Activated T-helper 2 cell treated with anti-CD3 and anti-CD28 coated beads, Interferon-gamma antibody, Interleukin-2, Interleukin-4, amounts not matched to agents 10 μg/mL and 5 μg/mL and 100 μg/mL, durations not matched to agents 14 hours and 24 hours and 36 hours (primary cell): ENCODE measurements at regions of chr17 and their contacts with region 1.

Region 1: DNA sequence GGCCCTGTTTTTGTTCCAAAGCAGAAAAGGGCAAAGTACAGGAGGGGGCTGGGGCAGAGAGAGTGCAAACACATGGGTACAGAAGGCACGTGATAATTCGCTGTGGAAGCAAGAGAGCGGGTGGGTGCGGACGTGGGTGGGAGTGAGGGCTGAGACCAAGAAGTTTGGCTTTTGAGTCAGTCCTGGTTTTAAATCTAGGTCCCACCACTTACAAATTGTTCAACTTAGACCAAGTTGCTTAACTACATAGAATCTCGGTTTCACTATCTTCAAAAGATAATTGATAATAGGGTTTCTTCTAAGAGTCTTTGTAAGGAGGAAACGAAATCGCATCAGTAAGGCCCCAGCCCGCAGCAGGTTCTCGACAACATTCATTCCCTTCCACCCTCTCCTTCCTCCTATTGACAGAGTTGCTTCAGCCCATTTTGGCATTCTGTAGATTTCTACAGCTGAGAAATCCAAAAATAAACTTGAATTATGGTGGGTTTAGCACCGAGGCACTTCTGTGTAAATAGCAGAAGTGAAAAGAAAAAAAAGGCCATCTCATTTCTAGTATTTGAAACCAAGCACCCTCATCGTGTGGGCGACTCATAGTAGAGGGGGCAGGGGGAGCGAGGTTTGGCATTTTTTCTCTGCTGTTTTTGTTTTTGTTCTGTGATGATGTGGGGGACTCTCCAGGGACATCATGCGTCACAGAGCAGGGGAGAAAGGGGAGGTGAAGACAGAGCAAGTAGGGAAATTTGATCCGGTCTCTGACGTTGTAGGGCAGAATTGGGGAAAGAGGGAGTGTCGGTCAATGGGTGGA is 33.6 kb upstream of the CCR7 start:
- DNase-seq: no peak
- H3K4me3 Mint-ChIP-seq: peak overlapping the region; percentile 54
- H3K27ac Mint-ChIP-seq: peak overlapping the region; percentile 89
- H3K4me1 Mint-ChIP-seq: peaks cover 83% of the 10 kb centered on the region
- H3K27me3 Mint-ChIP-seq: no peaks in the 10 kb centered on the region

Region 2: GRCh38 chr17:40526668-40527067 is 72.2 kb before region 1 on chr17:
- intact Hi-C with region 1: no loop called
- DNase-seq: no peak
- H3K4me3 Mint-ChIP-seq: no peak overlapping the region
- H3K27ac Mint-ChIP-seq: peak overlapping the region; percentile 16
- H3K4me1 Mint-ChIP-seq: peaks cover 49% of the 10 kb centered on the region
- H3K27me3 Mint-ChIP-seq: no peaks in the 10 kb centered on the region

Region 3: GRCh38 chr17:40559954-40560591 is 38.8 kb before region 1 on chr17:
- intact Hi-C with region 1: loop called (anchors 1 kb)
- DNase-seq: peak; percentile 77
- H3K4me3 Mint-ChIP-seq: peak overlapping the region; percentile 95
- H3K27ac Mint-ChIP-seq: peak overlapping the region; percentile 99
- H3K4me1 Mint-ChIP-seq: peaks cover 61% of the 10 kb centered on the region
- H3K27me3 Mint-ChIP-seq: no peaks in the 10 kb centered on the region

Region 4: GRCh38 chr17:40582328-40582901 is 16.4 kb before region 1 on chr17:
- intact Hi-C with region 1: loop called (anchors 1 kb)
- DNase-seq: peak; percentile 52
- H3K4me3 Mint-ChIP-seq: peak overlapping the region; percentile 4
- H3K27ac Mint-ChIP-seq: peak overlapping the region; percentile 75
- H3K4me1 Mint-ChIP-seq: peaks cover 75% of the 10 kb centered on the region
- H3K27me3 Mint-ChIP-seq: no peaks in the 10 kb centered on the region

Region 5: GRCh38 chr17:40615295-40615988 is 16.6 kb after region 1 on chr17:
- intact Hi-C with region 1: loop called (anchors 1 kb)
- DNase-seq: no peak
- H3K4me3 Mint-ChIP-seq: peak overlapping the region; percentile 59
- H3K27ac Mint-ChIP-seq: peak overlapping the region; percentile 85
- H3K4me1 Mint-ChIP-seq: peaks cover 59% of the 10 kb centered on the region
- H3K27me3 Mint-ChIP-seq: no peaks in the 10 kb centered on the region

Region 6: DNA sequence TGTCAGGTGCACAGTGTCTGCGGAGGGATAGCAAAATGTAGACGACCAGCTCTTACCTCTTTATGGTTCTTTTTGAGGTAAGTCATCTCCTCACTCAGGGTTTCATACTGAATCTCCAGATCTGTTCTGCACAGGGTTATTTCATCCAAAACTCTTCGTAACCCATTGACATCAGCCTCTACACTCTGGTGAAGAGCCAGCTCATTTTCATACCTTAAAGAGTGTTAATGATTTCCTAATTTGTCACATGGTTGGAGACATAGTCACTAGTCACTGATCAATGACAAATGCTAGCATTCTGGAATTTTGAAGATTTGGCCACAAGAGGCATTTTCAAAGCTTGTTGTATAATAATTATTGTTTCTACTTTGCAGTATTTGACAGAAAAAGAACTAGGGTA is 154.9 kb after region 1 on chr17:
- intact Hi-C with region 1: no loop called
- DNase-seq: no peak
- H3K4me3 Mint-ChIP-seq: no peak overlapping the region
- H3K27ac Mint-ChIP-seq: no peak overlapping the region
- H3K4me1 Mint-ChIP-seq: no peaks in the 10 kb centered on the region
- H3K27me3 Mint-ChIP-seq: peaks cover 33% of the 10 kb centered on the region